ENCODE measurements at regions of chr12 and their contacts with region 1.

Region 1: GRCh38 chr12:120437754-120438494 is at the start of gene COX6A1:
- DNase-seq: peak; percentile 96
- ATAC-seq: peak; percentile 99
- total RNA-seq, gene COX6A1: 135 TPM

Region 2: DNA sequence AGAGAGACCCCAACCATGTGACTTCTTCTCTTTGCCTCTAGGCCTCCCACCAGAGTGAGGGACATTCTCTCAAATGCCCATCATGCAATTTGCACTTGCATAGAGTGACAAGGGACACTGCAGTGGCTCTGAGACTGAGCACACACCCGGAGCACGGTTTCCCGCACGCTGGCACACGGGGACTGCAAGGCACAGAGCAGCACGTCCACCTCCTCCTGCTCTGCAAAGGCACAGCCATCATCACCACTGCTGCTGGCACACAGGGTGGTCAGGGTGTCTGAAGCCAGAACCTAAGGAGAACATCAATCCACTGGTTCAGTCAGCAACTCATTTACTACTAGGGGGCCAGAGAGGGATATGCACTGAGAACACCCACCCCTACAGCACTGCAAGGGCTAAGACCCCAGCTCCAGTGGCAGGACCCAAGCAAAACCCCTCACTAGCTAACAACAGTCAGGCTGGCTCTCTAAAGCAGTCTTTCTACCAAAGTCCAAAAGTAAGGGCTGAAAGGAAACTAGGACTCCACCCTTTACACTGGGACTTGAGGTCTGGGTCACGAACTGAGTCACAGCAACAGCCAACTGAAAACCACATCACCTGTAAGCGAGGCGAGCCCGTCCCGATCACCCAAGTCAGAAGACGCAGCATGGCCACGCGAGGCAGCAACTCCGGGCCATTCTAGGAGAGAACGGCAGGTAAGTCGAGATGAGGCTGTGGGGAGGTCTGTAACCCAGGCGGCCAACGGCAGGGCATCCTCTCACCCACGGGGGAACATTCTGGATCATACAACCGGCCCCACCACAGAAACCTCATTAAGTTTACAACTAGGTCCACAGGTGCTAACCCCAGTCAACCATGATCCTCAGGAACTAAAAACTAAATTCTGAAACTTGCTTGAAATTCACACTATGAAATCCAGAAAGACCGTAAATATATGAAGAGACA is 281.3 kb before region 1 on chr12:
- intact Hi-C with region 1: no loop called
- DNase-seq: no peak
- ATAC-seq: no peak

Region 3: DNA sequence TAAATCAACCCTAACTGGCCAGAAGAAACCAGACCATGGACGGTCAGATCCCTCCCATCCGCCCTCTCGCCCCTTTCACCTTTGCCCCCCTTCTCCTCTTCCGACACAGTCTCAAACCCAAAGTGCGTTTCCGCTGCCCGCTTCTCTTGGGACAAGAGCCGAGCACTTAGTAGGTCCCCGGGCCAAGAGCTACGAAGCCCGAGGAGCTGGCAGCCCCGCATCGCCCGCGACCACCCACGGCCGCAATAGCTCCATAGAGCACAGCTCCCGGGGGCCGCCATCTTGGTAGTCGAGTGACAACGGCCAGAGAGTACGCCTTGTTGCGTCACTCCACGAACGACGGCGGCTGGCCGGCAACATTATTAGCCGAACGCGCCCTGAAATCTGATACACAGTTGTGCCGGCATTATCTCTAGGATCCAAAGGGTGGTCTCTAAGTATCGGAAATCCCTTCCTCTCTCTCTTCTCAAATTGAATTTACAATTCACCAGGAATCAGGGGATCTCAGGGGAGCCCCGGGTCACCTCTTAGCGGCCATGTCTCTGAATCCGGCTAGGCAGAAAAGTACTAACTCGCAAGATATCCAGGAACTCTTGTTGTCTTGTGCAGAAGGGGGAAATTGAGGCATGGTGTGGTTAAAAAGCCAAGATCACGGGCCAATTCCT is 91.1 kb after region 1 on chr12 and contains the start of gene COQ5:
- intact Hi-C with region 1: loop called (anchors 2 kb)
- DNase-seq: peak; percentile 97
- ATAC-seq: peak; percentile 94
- total RNA-seq, gene COQ5: 42.9 TPM

Measured in Right ventricle myocardium inferior (tissue), 1 donor.